ENCODE measurements at regions of chr1 and their contacts with region 1.

Region 1: GRCh38 chr1:168609133-168609715 is 32.8 kb downstream of the XCL1 start:
- DNase-seq: peak; percentile 81

Region 2: DNA sequence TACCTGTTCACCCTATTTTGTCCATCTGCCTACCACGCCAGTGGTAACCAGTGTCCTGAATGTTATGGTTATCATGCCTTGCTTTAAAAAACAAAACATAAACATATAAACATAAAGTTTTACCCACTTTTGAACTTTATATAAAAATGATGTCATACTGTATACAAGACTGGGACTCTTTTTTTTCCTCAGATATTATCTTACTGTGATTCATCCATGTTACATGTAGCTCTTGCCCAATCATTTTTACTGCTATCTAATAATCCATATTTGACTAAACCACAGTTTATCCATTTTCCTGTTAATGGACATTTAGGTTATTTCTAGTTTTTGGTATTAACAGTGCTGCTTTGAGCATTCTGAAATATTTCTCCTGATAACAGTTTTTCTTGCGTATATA is 551.3 kb before region 1 on chr1:
- intact Hi-C with region 1: no loop called
- DNase-seq: no peak

Region 3: DNA sequence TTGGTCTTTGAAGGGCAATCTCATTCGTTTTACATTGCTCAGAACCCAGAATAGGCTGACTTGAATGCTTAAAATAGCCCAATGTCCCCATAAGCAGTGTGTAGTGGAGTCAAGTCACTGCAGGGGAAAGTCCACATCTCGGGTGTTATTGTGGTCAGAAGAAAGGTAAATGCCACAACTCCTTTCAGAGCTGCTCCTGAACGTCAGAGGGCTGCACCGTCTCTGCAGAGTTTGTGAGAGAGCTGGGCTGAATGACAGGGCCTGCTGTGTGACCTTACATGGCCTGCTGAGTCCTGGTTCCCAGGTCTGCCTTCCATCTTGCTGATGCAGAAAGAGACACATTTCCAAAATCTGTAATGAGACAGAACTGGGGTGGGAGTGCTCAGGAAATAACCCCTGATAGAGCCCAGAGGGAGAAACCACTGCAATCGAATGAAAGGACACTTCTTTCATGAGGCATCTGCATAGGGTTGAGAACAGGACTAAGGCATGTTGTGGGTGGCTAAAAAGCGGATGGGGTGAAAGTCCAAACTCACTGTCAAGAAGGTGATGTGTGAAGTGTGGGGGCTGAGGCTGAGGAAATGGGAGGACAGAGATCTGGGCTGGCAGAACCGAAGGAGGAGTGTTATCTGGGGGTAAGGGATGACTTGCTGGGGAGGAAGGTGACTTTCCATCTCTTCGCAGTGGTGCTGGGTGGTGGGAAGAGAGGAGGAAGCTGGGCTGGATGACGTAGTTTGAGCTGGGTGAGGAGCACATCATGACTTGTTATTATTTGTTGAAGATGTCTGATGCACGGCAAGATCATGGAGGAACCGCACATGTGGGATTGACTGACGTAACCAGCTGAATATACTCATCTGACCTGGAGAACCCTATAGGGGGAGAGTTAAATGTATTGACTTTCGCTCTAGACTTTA is 99.1 kb before region 1 on chr1:
- intact Hi-C with region 1: no loop called
- DNase-seq: no peak

Region 4: GRCh38 chr1:168709405-168710305 is 100.4 kb after region 1 on chr1:
- intact Hi-C with region 1: loop called (anchors 5 kb)
- DNase-seq: no peak

Measured in cardiac septum (tissue), 1 donor.